ENCODE measurements at regions of chr1 and their contacts with region 1.

Region 1: GRCh38 chr1:234309598-234310459 is 63.4 kb upstream of the COA6 start:
- DNase-seq: peak; percentile 79
- H3K27ac ChIP-seq: peak overlapping the region; percentile 55
- CTCF ChIP-seq: peak; percentile 93

Region 2: DNA sequence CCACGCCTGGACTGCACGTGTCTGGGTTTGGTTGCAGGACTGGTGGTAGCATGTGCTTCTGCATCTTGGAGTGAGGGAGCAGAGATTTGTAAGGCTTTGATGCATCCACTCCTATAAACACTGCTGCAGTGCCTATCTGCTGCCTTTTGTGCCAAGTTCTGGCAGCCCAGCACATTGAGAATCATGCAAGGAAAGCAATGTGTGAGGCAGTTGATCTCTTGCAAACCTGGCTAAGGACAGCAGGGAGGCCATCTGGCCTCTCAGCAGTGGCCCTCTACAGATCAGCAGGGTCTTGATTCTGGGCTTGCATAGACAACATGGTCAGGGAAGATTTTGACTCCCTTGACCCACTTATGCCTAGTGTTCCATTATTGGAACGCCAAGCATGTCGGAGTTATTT is 17.8 kb before region 1 on chr1:
- CTCF ChIA-PET with region 1: interaction called, 12 read pairs
- POLR2A ChIA-PET with region 1: no interaction called
- DNase-seq: no peak
- H3K27ac ChIP-seq: no peak overlapping the region
- CTCF ChIP-seq: no peak

Region 3: DNA sequence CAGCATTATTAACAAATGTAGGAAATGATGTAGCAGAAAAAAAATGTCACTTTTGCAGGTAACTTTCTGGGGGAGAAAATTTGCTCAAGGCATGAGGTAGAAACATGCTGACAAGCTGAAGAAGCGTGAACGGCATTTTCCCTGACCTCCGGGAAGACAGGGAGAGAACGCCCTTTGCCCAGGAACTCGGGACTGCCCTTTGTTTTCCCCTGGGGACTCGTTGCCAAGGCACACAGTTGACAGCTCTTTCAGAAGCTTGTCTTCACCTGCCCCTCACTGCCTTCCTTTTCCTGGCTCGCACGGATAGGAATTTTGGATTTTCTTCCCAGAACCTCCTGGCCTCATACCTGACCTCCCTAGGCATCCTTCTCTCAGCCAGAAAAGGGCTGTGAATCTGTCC is 10.7 kb after region 1 on chr1:
- CTCF ChIA-PET with region 1: interaction called, 15 read pairs
- POLR2A ChIA-PET with region 1: no interaction called
- DNase-seq: peak; percentile 29
- H3K27ac ChIP-seq: peak overlapping the region; percentile 75
- CTCF ChIP-seq: no peak

Region 4: GRCh38 chr1:234326497-234327366 is 16.9 kb after region 1 on chr1:
- CTCF ChIA-PET with region 1: interaction called, 15 read pairs
- POLR2A ChIA-PET with region 1: no interaction called
- DNase-seq: peak; percentile 53
- H3K27ac ChIP-seq: no peak overlapping the region
- CTCF ChIP-seq: peak; percentile 82